Ovary (tissue), 10 donors: ENCODE measurements at regions of chr2 and their contacts with region 1.

Region 1: GRCh38 chr2:677056-677965 is at the start of gene TMEM18:
- DNase-seq: peak in 4 of 5 donors; percentile 94 to 99 (median 98)
- H3K4me3 ChIP-seq: peak within 1 kb of the TSS; percentile 83
- H3K27ac ChIP-seq: peak within 1 kb of the TSS; percentile 87 to 97
- H3K4me1 ChIP-seq: peaks cover 7% of the 10 kb centered on the region
- H3K27me3 ChIP-seq: no peaks in the 10 kb centered on the region
- CTCF ChIP-seq: peak in 2 of 3 donors; percentile 58 to 76
- EP300 ChIP-seq: no peak
- POLR2A ChIP-seq: peak; percentile 95
- total RNA-seq, gene TMEM18: 27.5 to 48.5 (median 39.5) TPM

Region 2: GRCh38 chr2:628651-629050 is 48.7 kb before region 1 on chr2:
- intact Hi-C with region 1: no loop called
- DNase-seq: no peak
- H3K4me3 ChIP-seq: no peak overlapping the region
- H3K27ac ChIP-seq: no peak overlapping the region
- H3K4me1 ChIP-seq: no peaks in the 10 kb centered on the region
- H3K27me3 ChIP-seq: no peaks in the 10 kb centered on the region
- CTCF ChIP-seq: no peak
- EP300 ChIP-seq: no peak
- POLR2A ChIP-seq: no peak

Region 3: DNA sequence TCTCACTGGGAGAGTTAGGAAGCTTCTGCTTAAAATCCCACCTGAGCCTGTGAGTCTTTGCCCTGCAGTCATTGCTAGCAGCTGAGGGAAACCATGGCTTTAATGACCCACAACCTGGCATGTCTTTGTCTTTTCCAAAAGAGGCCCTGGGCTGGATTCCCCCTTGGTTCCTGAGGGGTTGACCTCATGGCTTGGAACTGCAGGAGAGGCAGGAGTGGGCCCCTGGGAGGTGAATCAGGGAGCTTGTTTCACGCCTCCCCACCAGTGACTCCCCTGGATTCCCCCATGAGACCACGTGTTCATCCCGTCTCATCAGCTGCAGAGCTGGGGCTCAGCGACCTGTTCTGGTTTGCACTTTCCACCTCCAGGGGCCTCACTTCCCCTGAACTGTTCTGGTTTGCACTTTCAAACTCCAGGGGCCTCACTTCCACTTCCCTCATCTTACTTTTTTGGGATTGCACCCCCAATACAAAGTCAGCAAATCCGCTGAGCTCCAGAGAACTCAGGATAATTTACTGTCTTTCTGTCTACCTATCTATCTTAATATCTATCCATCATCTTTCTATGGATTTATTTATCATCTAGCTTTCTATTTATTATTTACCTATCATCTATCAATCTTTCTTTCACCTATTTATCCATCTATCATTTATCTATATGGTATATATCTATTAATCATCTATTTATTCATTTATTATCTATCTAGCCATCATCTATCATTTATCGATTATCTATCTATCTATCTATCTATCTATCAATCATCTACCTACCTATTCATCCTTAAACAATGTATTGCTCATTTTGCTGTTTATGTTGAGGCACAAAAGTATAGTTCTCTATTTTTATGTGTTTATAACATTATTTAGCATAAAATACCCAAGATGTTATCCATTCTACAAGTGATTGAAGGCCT is 58.6 kb after region 1 on chr2:
- intact Hi-C with region 1: loop called in 1 of 4 experiments (anchors 5 kb)
- DNase-seq: no peak
- H3K4me3 ChIP-seq: no peak overlapping the region
- H3K27ac ChIP-seq: no peak overlapping the region
- H3K4me1 ChIP-seq: peaks cover 2% of the 10 kb centered on the region
- H3K27me3 ChIP-seq: no peaks in the 10 kb centered on the region
- CTCF ChIP-seq: no peak
- EP300 ChIP-seq: no peak
- POLR2A ChIP-seq: no peak